T-cell (primary cell): ENCODE measurements at regions of chr1 and their contacts with region 1.

Region 1: GRCh38 chr1:161045750-161046571 is at the start of gene USF1:
- DNase-seq: peak; percentile 82 to 97 (median 91)
- ATAC-seq: peak; percentile 82 to 85 (median 83)
- H3K4me3 ChIP-seq: peak within 1 kb of the TSS; percentile 95 to 97
- H3K4me3 Mint-ChIP-seq: peak within 1 kb of the TSS; percentile 89 to 98 (median 90)
- H3K27ac ChIP-seq: peak within 1 kb of the TSS; percentile 85
- H3K27ac Mint-ChIP-seq: peak within 1 kb of the TSS; percentile 98 to 100
- H3K4me1 ChIP-seq: peaks cover 14 to 35% of the 10 kb centered on the region in 2 experiments
- H3K4me1 Mint-ChIP-seq: peaks cover 39 to 56% (median 49%) of the 10 kb centered on the region in 3 donors
- H3K27me3 ChIP-seq: no peaks in the 10 kb centered on the region
- H3K27me3 Mint-ChIP-seq: no peaks in the 10 kb centered on the region
- total RNA-seq, gene USF1: 65.4 to 96.1 (median 92.2) TPM

Region 2: DNA sequence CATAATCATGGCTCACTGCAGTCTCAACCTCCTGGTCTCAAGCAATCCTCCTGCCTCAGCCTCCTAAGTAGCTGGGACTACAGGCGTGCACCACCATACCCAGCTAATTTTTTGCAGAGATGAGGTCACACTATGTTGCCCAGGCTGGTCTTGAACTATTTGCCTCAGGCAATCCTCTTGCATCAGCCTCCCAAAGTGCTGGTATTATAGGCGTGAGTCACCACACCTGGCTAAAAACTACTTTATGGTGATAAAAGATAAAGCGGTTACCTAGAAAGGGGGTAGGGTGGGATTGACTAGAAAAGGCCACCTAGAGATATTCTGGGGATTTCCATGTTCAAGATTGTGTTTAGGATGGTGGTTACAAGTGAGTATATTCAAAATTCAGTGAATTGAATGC is 12.2 kb before region 1 on chr1:
- CTCF ChIA-PET with region 1: no interaction called
- POLR2A ChIA-PET with region 1: no interaction called
- DNase-seq: no peak
- ATAC-seq: no peak
- H3K4me3 ChIP-seq: no peak overlapping the region
- H3K4me3 Mint-ChIP-seq: no peak overlapping the region
- H3K27ac ChIP-seq: no peak overlapping the region
- H3K27ac Mint-ChIP-seq: no peak overlapping the region
- H3K4me1 ChIP-seq: peaks cover 7 to 19% of the 10 kb centered on the region in 2 experiments
- H3K4me1 Mint-ChIP-seq: peaks cover 24 to 33% (median 31%) of the 10 kb centered on the region in 3 donors
- H3K27me3 ChIP-seq: no peaks in the 10 kb centered on the region
- H3K27me3 Mint-ChIP-seq: no peaks in the 10 kb centered on the region

Region 3: GRCh38 chr1:161106431-161106830 is 60.5 kb after region 1 on chr1:
- CTCF ChIA-PET with region 1: no interaction called
- POLR2A ChIA-PET with region 1: no interaction called
- DNase-seq: no peak
- ATAC-seq: no peak
- H3K4me3 ChIP-seq: no peak overlapping the region
- H3K4me3 Mint-ChIP-seq: no peak overlapping the region
- H3K27ac ChIP-seq: no peak overlapping the region
- H3K27ac Mint-ChIP-seq: peak overlapping the region in 1 of 2 donors; percentile 51
- H3K4me1 ChIP-seq: no peaks in the 10 kb centered on the region
- H3K4me1 Mint-ChIP-seq: peaks cover 17 to 29% (median 19%) of the 10 kb centered on the region in 3 donors
- H3K27me3 ChIP-seq: no peaks in the 10 kb centered on the region
- H3K27me3 Mint-ChIP-seq: no peaks in the 10 kb centered on the region

Region 4: GRCh38 chr1:161159087-161159912 is 113.3 kb after region 1 on chr1 and contains the start of gene USP21:
- CTCF ChIA-PET with region 1: no interaction called
- POLR2A ChIA-PET with region 1: interaction called in 1 of 2 experiments, 11 read pairs
- DNase-seq: peak; percentile 77 to 95 (median 89)
- ATAC-seq: peak; percentile 93 to 97 (median 95)
- H3K4me3 ChIP-seq: peak within 1 kb of the TSS; percentile 65 to 68
- H3K4me3 Mint-ChIP-seq: peak within 1 kb of the TSS; percentile 86 to 94 (median 92)
- H3K27ac ChIP-seq: peak within 1 kb of the TSS; percentile 74
- H3K27ac Mint-ChIP-seq: peak within 1 kb of the TSS; percentile 90 to 94
- H3K4me1 ChIP-seq: peaks cover 16 to 39% of the 10 kb centered on the region in 2 experiments
- H3K4me1 Mint-ChIP-seq: peaks cover 66 to 76% (median 70%) of the 10 kb centered on the region in 3 donors
- H3K27me3 ChIP-seq: no peaks in the 10 kb centered on the region
- H3K27me3 Mint-ChIP-seq: no peaks in the 10 kb centered on the region
- total RNA-seq, gene USP21: 37.4 to 69.0 (median 59.5) TPM